MCF 10A (cell line): ENCODE measurements at regions of chr1 and their contacts with region 1.

Region 1: GRCh38 chr1:70221241-70222121 is at the start of gene SRSF11:
- DNase-seq: peak; percentile 93
- H3K4me3 Mint-ChIP-seq: peak within 1 kb of the TSS; percentile 78
- H3K27ac Mint-ChIP-seq: peak within 1 kb of the TSS; percentile 96
- H3K4me1 Mint-ChIP-seq: peaks cover 21% of the 10 kb centered on the region
- H3K27me3 Mint-ChIP-seq: no peaks in the 10 kb centered on the region
- CTCF ChIP-seq: no peak
- total RNA-seq, gene SRSF11: 209 and 218 TPM in 2 replicates

Region 2: DNA sequence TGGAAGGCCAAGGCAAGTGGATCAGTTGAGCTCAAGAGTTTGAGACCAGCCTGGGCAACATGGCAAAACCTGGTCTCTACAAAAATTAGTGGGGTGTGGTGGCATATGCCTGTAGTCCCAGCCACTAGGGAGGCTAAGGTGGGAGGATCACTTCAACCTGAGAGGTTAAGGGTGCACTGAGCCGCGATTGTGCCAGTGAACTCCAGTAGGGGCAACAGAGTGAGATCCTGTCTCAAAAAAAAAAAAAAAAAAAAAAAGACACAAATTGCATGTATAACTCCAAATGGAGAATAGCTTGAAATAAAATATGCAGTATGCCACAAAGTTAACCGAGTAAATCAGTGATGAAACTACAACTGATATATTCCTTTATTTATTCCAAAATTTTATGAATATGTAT is 67.7 kb before region 1 on chr1:
- CTCF ChIA-PET with region 1: no interaction called
- POLR2A ChIA-PET with region 1: no interaction called
- intact Hi-C with region 1: no loop called
- DNase-seq: no peak
- H3K4me3 Mint-ChIP-seq: no peak overlapping the region
- H3K27ac Mint-ChIP-seq: no peak overlapping the region
- H3K4me1 Mint-ChIP-seq: no peaks in the 10 kb centered on the region
- H3K27me3 Mint-ChIP-seq: no peaks in the 10 kb centered on the region
- CTCF ChIP-seq: no peak

Region 3: GRCh38 chr1:70205434-70206118 is 15.9 kb before region 1 on chr1 and contains the start of gene LRRC40:
- CTCF ChIA-PET with region 1: interaction called, 11 read pairs
- POLR2A ChIA-PET with region 1: interaction called, 193 read pairs
- intact Hi-C with region 1: no loop called
- DNase-seq: peak; percentile 94
- H3K4me3 Mint-ChIP-seq: peak within 1 kb of the TSS; percentile 80
- H3K27ac Mint-ChIP-seq: peak within 1 kb of the TSS; percentile 98
- H3K4me1 Mint-ChIP-seq: peaks cover 40% of the 10 kb centered on the region
- H3K27me3 Mint-ChIP-seq: no peaks in the 10 kb centered on the region
- CTCF ChIP-seq: no peak
- total RNA-seq, gene LRRC40: 14.7 and 14.9 TPM in 2 replicates

Region 4: GRCh38 chr1:70234733-70235132 is 13.3 kb after region 1 on chr1:
- CTCF ChIA-PET with region 1: interaction called, 7 read pairs
- POLR2A ChIA-PET with region 1: interaction called, 12 read pairs
- intact Hi-C with region 1: no loop called
- DNase-seq: no peak
- H3K4me3 Mint-ChIP-seq: no peak overlapping the region
- H3K27ac Mint-ChIP-seq: peak overlapping the region; percentile 76
- H3K4me1 Mint-ChIP-seq: no peaks in the 10 kb centered on the region
- H3K27me3 Mint-ChIP-seq: no peaks in the 10 kb centered on the region
- CTCF ChIP-seq: no peak